HAP-1 (cell line): ENCODE measurements at regions of chr17 and their contacts with region 1.

Region 1: GRCh38 chr17:40290629-40291287 is 3.1 kb downstream of the CDC6 start:
- DNase-seq: peak; percentile 49 to 54
- H3K4me3 ChIP-seq: no peak overlapping the region
- H3K4me1 ChIP-seq: peaks cover 4% of the 10 kb centered on the region
- H3K27me3 ChIP-seq: no peaks in the 10 kb centered on the region

Region 2: GRCh38 chr17:39808409-39808997 is 482.3 kb before region 1 on chr17:
- in situ Hi-C with region 1: no loop called
- DNase-seq: no peak
- H3K4me3 ChIP-seq: no peak overlapping the region
- H3K4me1 ChIP-seq: no peaks in the 10 kb centered on the region
- H3K27me3 ChIP-seq: peaks cover 15% of the 10 kb centered on the region; the same call in 1 of the 2 replicates

Region 3: DNA sequence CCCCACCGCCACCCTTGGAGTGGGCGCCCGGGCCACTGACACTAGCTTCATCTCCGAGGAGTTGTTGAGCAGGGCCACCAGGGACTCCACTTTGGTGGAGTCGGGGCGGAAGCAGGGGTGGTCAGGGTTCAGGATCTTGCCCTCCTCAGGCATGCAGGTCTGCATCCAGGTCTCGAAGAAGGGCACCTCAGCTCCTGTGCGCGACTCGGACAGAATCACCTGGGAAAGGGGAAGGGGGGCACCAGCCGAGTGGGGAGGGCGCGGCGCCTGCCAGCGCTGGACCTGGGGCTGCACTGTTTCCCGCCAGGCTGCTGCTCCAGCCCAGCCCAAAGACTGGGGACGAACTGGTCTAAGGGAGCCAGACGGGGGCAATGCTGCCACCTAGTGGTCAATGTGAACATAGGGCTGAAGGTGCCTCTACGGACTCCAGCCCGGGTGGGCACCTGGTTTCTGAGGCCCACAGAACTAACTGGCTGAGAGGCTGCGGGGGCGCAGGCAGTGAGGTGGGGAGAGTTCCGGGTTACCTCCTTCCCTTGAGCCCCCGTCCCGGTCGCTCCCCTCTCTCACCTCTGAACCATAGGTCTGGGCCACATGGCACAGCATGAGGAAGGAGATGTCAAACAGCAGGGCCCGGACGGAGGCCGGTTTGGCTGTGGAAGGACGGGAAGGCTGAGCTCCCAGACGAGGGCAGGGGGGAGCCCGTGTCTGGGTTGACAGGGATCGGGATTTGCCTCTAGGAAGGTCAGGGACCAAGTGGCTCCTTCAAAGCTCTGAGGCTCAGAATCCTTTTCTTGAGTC is 263.7 kb before region 1 on chr17:
- in situ Hi-C with region 1: loop called (anchors 10 kb)
- DNase-seq: peak; percentile 56 to 88
- H3K4me3 ChIP-seq: no peak overlapping the region
- H3K4me1 ChIP-seq: no peaks in the 10 kb centered on the region
- H3K27me3 ChIP-seq: no peaks in the 10 kb centered on the region

Region 4: DNA sequence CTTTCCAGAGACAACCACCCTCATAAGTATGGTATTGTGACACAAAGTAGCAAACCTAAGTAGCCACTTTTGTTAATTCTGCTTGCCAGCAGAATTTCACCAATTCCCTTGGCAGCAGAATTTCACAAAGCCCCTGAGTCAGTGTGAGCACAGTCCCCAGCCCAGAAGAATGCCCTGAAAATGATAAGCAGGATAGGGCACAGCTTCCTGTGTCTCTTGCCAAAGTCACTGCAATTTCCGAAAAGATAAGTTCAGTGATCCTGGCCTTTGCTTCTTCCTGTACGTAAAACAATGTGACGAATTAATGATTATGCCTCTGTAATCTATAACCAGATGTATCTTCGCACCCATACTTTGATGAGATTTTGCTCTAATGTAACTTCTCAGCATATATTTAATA is 87.6 kb before region 1 on chr17:
- in situ Hi-C with region 1: loop called (anchors 5 kb)
- DNase-seq: no peak
- H3K4me3 ChIP-seq: no peak overlapping the region
- H3K4me1 ChIP-seq: no peaks in the 10 kb centered on the region
- H3K27me3 ChIP-seq: no peaks in the 10 kb centered on the region